ENCODE measurements at regions of chr1 and their contacts with region 1.

Region 1: DNA sequence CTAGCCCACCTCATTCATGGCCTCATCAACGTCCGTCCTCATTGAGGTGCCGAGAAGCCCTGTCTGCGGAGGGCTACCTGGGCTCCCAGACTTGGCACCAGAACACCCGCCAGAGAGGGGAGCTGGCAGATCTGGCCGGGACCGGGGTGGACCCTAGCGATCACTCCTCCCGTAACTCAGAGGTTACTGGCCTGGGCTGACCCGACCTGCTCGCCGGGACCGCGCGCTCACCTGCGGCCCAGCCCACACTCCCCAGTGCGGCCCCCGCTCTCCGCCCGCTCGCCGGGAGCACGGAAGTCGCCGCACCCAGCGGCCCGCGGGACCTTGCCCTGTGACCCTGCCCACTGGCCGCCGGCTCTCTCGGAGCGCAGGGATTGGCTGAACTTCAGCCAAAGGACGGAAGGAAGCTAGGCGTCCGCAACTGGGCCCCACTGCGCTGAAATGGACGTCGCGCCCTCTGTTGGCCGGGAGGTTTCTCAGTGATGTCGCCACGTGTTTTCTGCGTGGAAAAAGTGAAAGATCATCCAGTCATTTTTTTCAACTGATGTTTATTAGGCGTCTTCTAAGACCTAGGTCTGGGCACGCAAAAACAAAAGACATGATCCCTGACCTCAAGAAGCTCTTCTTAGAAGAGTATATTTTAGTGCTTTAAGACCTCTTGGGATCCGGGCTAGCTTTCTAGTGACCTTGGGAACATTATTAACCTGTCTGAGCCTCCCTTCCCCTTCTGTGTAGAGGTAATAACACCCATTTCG is at the start of gene SMIM12:
- DNase-seq: peak; percentile 65 to 88
- H3K4me3 ChIP-seq: peak within 1 kb of the TSS; percentile 75 to 100 (median 94)
- H3K27ac ChIP-seq: peak within 1 kb of the TSS; percentile 39; the same call in 1 of the 2 replicates
- H3K4me1 ChIP-seq: peaks cover 0 to 7% (median 0%) of the 10 kb centered on the region in 4 experiments; a peak in 2 of 7 replicates
- H3K27me3 ChIP-seq: peaks cover 0 to 2% (median 0%) of the 10 kb centered on the region in 4 experiments; a peak in 1 of 7 replicates
- CTCF ChIP-seq: peak; percentile 74 to 89 (median 79)
- EP300 ChIP-seq: 0 out of 3 replicates have a peak, but pooled peaks of 1 of the 2 experiments have one; percentile 43
- POLR2A ChIP-seq: peak; percentile 70 to 92
- RAD21 ChIP-seq: peak; percentile 23 to 36; a peak in 3 of 4 replicates
- total RNA-seq, gene SMIM12: 40.9 and 42.6 TPM in 2 replicates

Region 2: GRCh38 chr1:34924759-34925555 is 65.3 kb after region 1 on chr1:
- CTCF ChIA-PET with region 1: interaction called, 18 read pairs
- POLR2A ChIA-PET with region 1: interaction called, 5 read pairs
- DNase-seq: peak in 1 of 2 experiments; percentile 96
- H3K4me3 ChIP-seq: no peak overlapping the region
- H3K27ac ChIP-seq: no peak overlapping the region
- H3K4me1 ChIP-seq: peaks cover 8 to 21% (median 11%) of the 10 kb centered on the region in 4 experiments
- H3K27me3 ChIP-seq: peaks cover 0 to 22% (median 15%) of the 10 kb centered on the region in 4 experiments; a peak in 6 of 7 replicates
- CTCF ChIP-seq: no peak
- EP300 ChIP-seq: peak in 1 of 2 experiments; percentile 83; a peak in 2 of 3 replicates
- POLR2A ChIP-seq: no peak
- RAD21 ChIP-seq: peak in 1 of 2 experiments; percentile 26; a peak in 1 of 4 replicates